Activated naive CD4-positive, alpha-beta T cell treated with anti-CD3 and anti-CD28 coated beads for 36 hours (primary cell): ENCODE measurements at regions of chr13 and their contacts with region 1.

Region 1: DNA sequence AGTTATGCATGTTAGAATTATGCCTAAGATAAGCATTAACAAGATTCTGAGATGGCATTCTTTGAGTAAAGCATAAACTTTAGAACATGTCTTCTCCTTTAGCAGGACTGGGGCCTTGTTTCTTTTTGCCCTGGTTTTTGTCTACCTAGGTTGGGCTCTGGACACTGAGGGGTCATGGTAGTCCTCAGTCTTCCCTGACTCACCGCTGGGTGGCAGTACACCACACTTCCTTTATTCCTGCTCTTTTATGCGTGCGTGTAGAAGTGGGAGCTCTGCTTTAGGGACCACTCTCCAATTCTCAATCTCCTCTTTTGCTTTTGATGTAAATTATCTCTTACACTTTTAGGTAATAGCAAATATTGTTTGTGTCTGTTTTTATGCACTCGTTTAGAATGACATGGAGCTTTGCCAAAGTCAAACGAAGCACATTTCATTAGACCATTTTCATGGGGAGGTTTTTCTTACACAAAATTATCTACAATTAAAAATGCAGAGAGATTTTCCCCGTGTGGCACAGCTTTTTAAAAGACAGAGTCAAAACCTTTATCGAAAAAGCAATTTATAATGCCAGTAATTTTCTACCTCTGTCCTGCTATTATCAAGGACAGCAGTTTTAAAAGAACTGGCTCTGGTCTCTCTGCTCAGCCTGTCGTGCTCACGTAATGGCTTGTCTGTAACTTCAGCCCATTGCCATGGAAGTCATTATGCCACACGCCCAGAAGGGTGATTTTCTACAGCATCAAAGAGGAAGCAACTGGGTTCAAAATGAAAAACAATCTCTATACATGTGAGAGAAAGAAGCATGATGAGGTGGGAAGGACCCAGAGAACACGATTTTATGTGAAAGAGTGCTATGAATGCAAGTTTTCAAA is 413.9 kb downstream of the COG6 start:
- DNase-seq: peak; percentile 87
- H3K4me3 Mint-ChIP-seq: peak overlapping the region; percentile 12
- H3K27ac Mint-ChIP-seq: peak overlapping the region; percentile 27
- H3K4me1 Mint-ChIP-seq: peaks cover 29% of the 10 kb centered on the region
- H3K27me3 Mint-ChIP-seq: no peaks in the 10 kb centered on the region

Region 2: GRCh38 chr13:39942552-39943273 is 126.7 kb before region 1 on chr13:
- CTCF ChIA-PET with region 1: interaction called, 4 read pairs
- intact Hi-C with region 1: loop called (anchors 5 kb)
- DNase-seq: peak; percentile 82
- H3K4me3 Mint-ChIP-seq: no peak overlapping the region
- H3K27ac Mint-ChIP-seq: no peak overlapping the region
- H3K4me1 Mint-ChIP-seq: peaks cover 7% of the 10 kb centered on the region
- H3K27me3 Mint-ChIP-seq: no peaks in the 10 kb centered on the region

Region 3: DNA sequence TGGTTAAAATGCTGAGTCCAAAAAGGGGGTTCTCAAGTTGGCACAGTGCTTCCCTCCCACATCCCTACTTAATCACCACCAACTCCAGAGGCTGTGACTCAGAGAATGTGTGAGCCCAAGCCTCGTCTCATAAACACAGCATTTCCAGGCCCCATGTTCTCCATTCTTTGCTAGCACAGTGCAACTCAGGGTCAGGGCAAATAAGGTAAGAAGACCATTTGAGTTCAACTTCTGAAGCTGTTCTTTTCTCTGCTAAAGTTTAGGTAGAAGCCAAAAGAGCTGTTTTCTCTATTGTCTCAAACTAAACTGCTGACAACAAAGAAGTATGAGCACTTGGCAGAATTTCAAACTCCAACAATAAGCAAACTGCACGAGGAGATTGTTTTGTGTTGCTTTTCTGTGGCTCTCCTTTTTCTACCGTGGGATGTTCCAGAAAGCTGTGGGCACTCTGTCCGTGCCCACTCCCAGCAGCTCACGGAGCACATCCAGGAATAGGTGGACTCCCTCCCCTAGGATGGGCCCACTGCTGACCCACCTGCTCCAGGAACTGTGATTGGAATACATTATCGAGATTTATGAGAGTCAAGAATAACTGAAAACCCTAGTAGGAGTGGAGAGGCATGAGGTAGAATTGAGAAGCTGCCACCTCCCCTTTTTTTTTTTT is 80.3 kb after region 1 on chr13:
- CTCF ChIA-PET with region 1: interaction called, 7 read pairs
- intact Hi-C with region 1: loop called (anchors 1 kb)
- DNase-seq: peak; percentile 37
- H3K4me3 Mint-ChIP-seq: no peak overlapping the region
- H3K27ac Mint-ChIP-seq: peak overlapping the region; percentile 52
- H3K4me1 Mint-ChIP-seq: peaks cover 73% of the 10 kb centered on the region
- H3K27me3 Mint-ChIP-seq: no peaks in the 10 kb centered on the region

Region 4: DNA sequence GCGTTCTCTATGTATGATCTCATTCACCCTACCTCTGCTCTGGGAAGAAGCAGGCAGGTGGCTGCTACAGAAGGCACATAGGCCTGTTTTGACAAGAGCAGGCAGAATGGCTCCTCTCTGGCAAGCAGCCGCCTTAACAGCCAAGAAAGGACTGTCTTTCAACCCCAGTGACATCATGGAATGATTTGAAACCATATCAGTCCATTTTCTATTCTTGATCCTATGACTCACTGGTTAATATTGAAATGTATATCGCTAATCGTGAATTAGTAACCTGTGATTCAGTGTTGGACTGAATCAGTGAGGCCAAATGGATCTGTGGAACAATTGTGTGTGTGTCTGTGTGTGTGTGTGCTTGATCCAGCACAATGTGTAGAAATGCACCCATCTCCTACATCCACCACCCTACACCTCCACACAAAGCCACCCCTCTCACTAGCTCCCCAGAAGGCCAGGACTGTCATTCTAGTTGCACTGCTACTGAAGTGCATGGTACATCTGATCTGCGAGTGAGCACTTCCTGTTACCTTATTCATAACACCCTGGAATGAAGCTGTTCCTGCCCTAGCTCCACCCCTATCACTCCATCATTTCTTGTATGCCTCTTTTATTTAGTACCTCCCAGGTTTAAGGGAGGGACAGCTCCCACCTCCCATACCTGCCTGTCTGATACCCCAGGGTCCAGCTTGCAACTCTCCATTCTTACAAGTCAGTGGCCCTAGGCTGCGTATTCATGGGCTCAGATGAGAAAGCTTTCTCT is 137.0 kb after region 1 on chr13:
- CTCF ChIA-PET with region 1: interaction called, 12 read pairs
- intact Hi-C with region 1: loop called (anchors 1 kb)
- DNase-seq: peak; percentile 74
- H3K4me3 Mint-ChIP-seq: peak overlapping the region; percentile 64
- H3K27ac Mint-ChIP-seq: peak overlapping the region; percentile 100
- H3K4me1 Mint-ChIP-seq: peaks cover 73% of the 10 kb centered on the region
- H3K27me3 Mint-ChIP-seq: no peaks in the 10 kb centered on the region

Region 5: DNA sequence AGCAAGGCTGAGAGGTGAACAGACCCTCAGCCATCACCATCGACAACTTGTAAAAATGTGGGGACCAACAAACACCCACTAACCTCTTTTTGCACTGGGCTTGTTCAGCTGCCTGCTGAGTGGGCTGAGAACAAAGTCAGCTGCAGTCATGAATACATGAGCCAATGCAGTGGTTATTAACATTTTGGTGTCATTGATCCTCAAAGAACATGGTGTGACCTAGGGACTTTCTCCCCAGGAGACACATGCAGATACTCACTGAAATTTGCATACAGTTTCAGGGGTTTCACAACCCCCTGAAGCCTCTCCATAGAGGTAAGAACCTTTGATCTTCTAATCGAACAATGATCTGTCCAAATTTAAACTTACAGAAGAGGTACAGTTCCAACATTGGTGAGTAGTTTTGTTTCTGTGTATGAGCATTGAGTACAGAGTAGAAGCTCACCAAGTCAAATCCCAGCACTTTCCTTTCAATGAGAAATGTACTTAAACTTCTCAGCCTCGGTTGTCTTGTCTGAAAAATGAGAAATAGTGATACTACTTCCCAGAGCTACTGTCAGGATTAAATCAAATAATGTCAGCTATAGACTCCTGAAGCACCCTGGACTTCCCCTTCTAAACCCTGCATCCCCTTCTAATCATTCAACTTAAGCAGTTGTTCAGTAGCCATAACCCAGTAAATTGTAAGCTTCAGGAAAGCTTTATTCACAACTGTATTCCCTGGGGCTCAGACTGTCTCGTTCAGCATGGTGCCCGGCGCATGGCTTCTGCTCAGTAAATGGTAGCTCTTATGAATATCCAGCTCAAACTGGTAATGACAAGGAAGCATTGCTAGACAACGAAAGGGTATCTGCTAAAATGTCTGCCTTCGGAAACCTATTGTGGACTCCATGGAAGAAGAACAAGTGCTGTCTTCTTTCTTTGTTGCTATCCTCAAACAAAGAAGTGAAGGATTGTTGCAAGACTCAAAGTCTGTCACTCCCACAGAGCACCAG is 448.4 kb after region 1 on chr13:
- CTCF ChIA-PET with region 1: interaction called, 5 read pairs
- intact Hi-C with region 1: loop called (anchors 10 kb)
- DNase-seq: peak; percentile 57
- H3K4me3 Mint-ChIP-seq: peak overlapping the region; percentile 23
- H3K27ac Mint-ChIP-seq: peak overlapping the region; percentile 87
- H3K4me1 Mint-ChIP-seq: peaks cover 78% of the 10 kb centered on the region
- H3K27me3 Mint-ChIP-seq: no peaks in the 10 kb centered on the region